ENCODE measurements at regions of chr9 and their contacts with region 1.

Region 1: DNA sequence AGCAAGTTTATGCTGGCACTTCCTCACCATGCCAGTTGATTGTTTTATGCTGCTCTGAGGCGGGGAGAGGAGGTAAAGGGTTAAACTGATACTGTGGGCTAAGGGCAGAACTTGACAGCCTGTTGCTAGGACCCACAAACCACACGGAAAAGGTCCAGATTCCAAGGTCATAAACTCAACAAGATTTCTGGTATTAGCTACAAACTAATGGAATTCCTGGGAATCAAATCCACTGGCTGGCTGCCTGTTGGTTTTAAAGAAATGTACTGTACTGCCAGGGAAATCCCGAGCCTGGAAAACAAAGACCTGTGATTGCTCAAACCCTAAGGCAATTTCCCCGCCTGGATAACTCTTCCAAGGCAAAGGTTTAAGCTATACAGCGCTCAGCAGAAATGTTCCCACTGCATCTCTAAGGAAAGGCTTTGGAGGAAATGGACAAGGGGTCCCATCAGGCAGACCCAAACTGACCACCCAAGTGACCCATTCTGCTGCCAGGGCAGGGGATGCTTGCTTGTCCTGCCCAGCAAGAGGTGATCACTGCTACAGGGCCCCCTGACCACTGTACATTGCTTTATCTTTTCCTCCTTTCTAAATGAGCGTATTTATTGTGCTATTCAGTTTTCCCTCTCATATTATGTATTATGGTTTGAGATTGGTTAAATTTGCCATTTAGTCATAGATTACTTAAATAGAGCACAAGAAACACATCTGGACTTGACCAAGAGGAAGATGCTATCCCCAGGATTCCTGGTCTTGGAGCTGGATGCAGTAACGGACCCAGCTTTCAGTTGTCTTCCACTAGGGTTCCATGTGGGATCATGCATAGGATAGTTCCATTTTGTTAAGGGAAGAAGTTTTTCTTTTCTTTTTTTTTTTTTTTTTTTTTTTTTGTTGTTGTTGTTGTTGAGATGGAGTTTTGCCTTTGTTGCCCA is 124.3 kb downstream of the SUSD1 start:
- DNase-seq: no peak
- ATAC-seq: no peak
- H3K4me3 ChIP-seq: no peak overlapping the region
- H3K27ac ChIP-seq: no peak overlapping the region
- H3K4me1 ChIP-seq: peaks cover 31% of the 10 kb centered on the region
- H3K27me3 ChIP-seq: no peaks in the 10 kb centered on the region
- CTCF ChIP-seq: no peak
- EP300 ChIP-seq: no peak
- POLR2A ChIP-seq: no peak
- RAD21 ChIP-seq: no peak

Region 2: DNA sequence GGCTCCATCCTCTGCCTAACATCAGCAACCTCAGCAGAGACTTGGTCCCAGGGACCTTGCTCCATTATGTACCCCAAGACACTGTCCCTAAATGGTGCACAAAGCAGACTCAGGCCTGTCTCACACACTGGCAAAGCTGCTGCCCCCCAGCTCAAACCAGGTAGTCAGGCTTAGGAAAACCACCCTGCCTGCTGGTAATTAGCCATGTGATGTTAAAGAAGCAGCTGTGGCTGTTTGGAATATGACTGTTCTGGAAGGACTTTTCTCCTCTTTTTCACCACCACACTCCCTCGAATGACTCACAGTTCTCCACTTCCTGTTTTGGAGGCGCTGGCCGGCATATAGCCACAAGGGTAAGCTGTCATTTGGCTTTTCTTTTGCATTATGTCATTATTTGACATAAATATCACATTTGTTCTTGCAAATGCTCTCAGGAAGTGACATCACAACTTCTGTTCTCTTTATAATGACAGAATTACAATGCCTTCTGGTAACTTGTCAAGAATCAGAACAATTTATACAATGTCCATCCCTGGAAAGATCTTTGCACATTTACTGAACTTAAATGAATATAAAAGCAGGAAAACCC is 10.4 kb after region 1 on chr9:
- CTCF ChIA-PET with region 1: interaction called, 10 read pairs
- POLR2A ChIA-PET with region 1: interaction called, 4 read pairs
- RAD21 ChIA-PET with region 1: interaction called, 15 read pairs
- SMC1A ChIA-PET with region 1: interaction called, 11 read pairs
- in situ Hi-C with region 1: no loop called
- intact Hi-C with region 1: no loop called
- DNase-seq: peak; percentile 75
- ATAC-seq: peak; percentile 93
- H3K4me3 ChIP-seq: no peak overlapping the region
- H3K27ac ChIP-seq: peak overlapping the region; percentile 79
- H3K4me1 ChIP-seq: peaks cover 22% of the 10 kb centered on the region
- H3K27me3 ChIP-seq: no peaks in the 10 kb centered on the region
- CTCF ChIP-seq: no peak
- EP300 ChIP-seq: peak; percentile 30 to 90; a peak in 3 of 4 replicates
- POLR2A ChIP-seq: no peak
- RAD21 ChIP-seq: peak; percentile 12; the same call in 1 of the 2 replicates

Measured in GM12878 (cell line).